Colonic mucosa (tissue), 4 donors: ENCODE measurements at regions of chr5 and their contacts with region 1.

Region 1: DNA sequence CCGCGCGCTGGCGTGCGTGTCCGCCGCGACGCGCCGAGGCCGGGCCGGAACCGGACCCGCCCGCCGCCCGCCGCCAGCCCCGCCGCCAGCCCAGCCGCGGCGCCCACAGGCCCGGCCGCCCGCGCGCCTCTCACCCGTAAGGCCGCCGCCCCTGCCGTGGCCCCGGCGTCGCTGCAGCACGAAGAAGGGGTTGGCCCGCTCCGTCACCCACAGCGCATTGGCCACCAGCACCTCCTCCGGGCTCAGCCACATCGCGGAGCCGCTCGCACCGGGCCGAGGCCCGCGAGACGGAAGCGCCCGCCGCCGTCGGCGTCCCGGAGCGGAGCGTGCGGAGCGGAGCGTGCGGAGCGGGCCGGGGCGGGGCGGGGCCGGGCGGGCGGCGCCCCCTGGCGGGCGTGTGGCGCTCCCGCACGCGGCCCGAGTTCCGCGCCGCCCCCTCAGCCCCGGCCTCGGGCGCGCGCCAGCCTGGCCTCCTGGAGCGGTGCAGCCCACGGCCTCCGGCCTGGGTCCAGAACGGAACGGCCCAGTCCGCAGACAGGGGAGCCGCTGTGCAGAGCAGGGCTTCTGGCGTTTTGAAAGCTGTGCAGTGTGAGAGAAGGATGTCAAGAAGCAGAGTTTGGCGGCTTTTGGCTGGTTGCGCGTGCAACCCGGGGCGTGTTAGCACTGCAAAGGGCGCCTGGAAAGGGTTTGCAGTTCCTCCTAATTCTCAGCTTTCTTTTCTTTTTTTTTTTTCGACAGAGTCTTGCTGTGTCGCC is at the start of gene TBC1D9B:
- DNase-seq: peak; percentile 59
- H3K4me3 ChIP-seq: peak within 1 kb of the TSS; percentile 66
- H3K27ac ChIP-seq: peak within 1 kb of the TSS; percentile 40
- H3K4me1 ChIP-seq: peaks cover 7% of the 10 kb centered on the region
- H3K27me3 ChIP-seq: no peaks in the 10 kb centered on the region
- CTCF ChIP-seq: peak; percentile 14
- total RNA-seq, gene TBC1D9B: 89.3 to 136 TPM

Region 2: DNA sequence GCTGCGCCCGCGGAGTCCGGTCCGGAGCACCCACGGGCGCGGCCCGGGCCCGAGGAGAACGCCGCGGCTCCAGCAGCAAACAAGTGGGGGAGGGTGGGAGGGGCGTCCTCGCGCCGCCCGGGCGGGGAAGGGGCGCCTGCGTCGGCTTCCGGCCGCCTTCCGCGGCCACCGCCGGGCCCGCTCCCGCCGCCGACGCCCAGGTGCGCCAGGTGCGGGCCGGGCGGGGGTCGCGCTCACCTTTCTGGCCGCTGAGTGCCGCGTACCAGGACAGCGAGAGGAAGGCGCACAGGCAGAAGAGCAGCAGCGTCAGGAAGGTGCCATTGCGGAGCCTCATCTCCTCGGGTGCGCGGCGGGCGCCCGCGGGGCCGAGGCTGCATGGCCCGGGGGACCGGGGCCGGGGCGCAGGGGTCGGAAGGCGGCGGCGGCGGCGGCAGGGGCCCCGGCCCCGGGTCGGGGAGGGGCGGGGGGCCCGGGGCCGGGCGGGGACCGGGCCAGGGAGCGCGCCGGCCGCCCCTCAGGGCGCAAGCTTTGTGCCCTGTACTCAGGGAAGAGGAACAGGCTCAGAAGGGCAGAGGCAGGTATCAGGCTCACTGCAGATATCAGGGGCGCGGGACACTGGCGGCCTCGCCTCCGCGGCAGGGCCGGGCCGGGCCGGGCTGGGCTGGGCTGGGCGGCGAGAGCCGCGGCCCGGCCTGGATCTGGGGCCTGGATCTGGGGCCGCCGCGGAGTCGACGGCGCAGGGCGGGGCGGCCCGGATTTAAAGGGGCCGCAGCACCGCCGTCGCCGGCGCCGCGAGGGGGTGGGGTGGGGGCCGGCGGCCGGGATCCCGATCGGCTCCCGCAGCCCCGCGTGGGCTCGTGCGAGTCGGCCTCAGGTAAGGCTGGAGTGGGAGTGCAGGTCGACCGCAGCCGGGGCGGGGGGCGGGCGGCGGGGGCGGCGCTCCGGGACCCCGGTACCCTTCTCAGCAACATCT is 101.2 kb before region 1 on chr5 and contains the start of gene MGAT4B:
- intact Hi-C with region 1: loop called (anchors 10 kb)
- DNase-seq: peak; percentile 83
- H3K4me3 ChIP-seq: peak within 1 kb of the TSS; percentile 84
- H3K27ac ChIP-seq: peak within 1 kb of the TSS; percentile 99
- H3K4me1 ChIP-seq: peaks cover 38% of the 10 kb centered on the region
- H3K27me3 ChIP-seq: no peaks in the 10 kb centered on the region
- CTCF ChIP-seq: no peak
- total RNA-seq, gene MGAT4B: 332 to 540 TPM

Region 3: DNA sequence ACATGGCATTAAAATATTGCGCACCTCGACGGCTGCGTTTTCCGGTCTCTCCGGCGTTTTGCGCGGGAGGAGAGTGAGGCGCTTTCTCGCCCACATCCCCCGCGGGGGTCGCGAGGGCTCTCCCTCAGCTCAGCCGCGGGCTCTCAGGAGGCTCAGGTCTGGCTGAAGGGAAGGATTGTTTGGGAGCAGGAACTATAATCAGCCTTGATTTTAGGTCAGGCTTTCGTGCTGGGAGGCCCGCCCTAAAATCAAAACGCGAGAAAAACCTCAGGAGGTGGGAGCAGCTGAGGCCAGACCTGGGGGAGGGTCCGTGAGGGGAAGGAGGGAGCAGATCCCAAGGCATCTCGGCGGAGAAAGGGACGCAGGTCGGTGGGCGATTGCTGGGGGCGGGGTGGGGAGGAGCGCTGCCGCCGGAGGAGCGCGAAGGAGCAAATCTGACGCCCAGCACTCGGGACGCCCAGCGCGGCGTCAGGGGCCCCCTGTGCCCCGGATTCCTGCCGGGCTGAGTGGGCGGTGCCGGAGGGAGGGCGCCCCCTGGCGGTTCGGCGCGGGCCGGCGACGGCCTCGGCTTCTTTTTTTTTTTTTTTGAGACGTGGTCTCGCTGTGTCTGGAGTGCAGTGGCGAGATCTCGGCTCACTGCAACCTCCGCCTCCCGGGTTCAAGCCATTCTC is 182.5 kb after region 1 on chr5:
- intact Hi-C with region 1: loop called (anchors 5 kb)
- DNase-seq: peak; percentile 64
- H3K4me3 ChIP-seq: peak overlapping the region; percentile 56
- H3K27ac ChIP-seq: peak overlapping the region; percentile 9
- H3K4me1 ChIP-seq: peaks cover 5% of the 10 kb centered on the region
- H3K27me3 ChIP-seq: no peaks in the 10 kb centered on the region
- CTCF ChIP-seq: peak; percentile 96